ENCODE measurements at regions of chr17 and their contacts with region 1.

Region 1: GRCh38 chr17:38853292-38854219 is at the start of gene RPL23:
- DNase-seq: peak; percentile 88
- H3K4me3 ChIP-seq: peak within 1 kb of the TSS; percentile 74 to 91
- H3K27ac ChIP-seq: peak within 1 kb of the TSS; percentile 95 to 96
- H3K4me1 ChIP-seq: peaks cover 17 to 20% of the 10 kb centered on the region in 2 experiments; a peak in 2 of 4 replicates
- H3K27me3 ChIP-seq: no peaks in the 10 kb centered on the region
- CTCF ChIP-seq: no peak
- EP300 ChIP-seq: no peak
- RAD21 ChIP-seq: no peak
- polyA plus RNA-seq, gene RPL23: 2,658 and 2,763 TPM in 2 replicates

Region 2: DNA sequence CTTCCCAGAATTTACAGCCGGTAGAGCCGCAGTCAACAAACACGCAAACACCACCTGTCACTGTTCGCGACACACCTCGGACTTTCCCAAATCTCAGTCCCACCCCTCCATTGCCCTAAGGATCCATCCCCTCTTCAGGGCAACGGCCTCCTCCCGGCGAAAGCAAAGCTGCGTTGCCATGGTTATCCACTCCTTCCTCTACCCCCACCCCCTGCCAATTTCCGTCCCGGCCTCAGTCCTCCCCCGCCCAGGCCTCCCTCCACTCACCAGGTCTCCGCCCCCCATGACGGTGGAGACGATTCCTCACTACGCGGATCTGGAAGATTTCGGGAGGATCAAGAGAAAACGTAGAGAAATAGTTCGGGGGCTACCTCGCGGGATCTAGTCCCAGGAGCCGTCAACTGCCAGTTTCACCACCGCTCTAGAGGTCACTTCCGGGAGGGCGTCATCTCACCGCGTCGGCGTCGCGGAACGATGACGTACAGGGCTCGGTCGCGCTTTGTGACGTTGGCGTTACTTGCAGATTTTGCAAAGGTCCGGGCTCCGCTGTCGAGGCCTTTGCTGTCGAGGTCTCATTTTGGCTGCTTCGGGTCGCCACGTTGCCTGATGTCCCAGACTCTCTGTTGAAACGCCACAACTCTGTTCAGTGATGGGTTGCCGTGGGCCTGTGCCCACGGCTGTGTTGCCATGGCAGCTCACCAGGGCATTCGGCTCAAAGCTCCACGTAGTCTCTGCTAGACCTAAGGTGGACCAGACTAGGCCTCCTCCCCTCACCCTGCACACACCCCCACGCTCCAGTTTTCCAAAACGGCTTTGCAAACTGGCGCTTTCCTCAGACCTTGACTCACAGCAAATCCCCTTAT is 28.4 kb before region 1 on chr17 and contains the start of gene CWC25:
- CTCF ChIA-PET with region 1: no interaction called
- POLR2A ChIA-PET with region 1: interaction called, 16 read pairs
- DNase-seq: peak; percentile 90
- H3K4me3 ChIP-seq: peak within 1 kb of the TSS; percentile 73 to 94
- H3K27ac ChIP-seq: peak within 1 kb of the TSS; percentile 94 to 97
- H3K4me1 ChIP-seq: peaks cover 5 to 15% of the 10 kb centered on the region in 2 experiments; a peak in 1 of 4 replicates
- H3K27me3 ChIP-seq: no peaks in the 10 kb centered on the region
- CTCF ChIP-seq: no peak
- EP300 ChIP-seq: peak in 1 of 2 experiments; percentile 31; a peak in 1 of 4 replicates
- RAD21 ChIP-seq: no peak
- polyA plus RNA-seq, gene CWC25: 15.6 and 21.2 TPM in 2 replicates

Region 3: GRCh38 chr17:38868817-38869525 is 15.4 kb after region 1 on chr17:
- CTCF ChIA-PET with region 1: interaction called, 10 read pairs
- POLR2A ChIA-PET with region 1: interaction called, 41 read pairs
- DNase-seq: peak; percentile 64
- H3K4me3 ChIP-seq: peak overlapping the region; percentile 94 to 97
- H3K27ac ChIP-seq: peak overlapping the region; percentile 89 to 96
- H3K4me1 ChIP-seq: peaks cover 19 to 28% of the 10 kb centered on the region in 2 experiments; a peak in 3 of 4 replicates
- H3K27me3 ChIP-seq: no peaks in the 10 kb centered on the region
- CTCF ChIP-seq: peak; percentile 52
- EP300 ChIP-seq: peak in 1 of 2 experiments; percentile 11; a peak in 2 of 4 replicates
- RAD21 ChIP-seq: 0 out of 2 replicates have a peak, but pooled peaks have one; percentile 0

Region 4: DNA sequence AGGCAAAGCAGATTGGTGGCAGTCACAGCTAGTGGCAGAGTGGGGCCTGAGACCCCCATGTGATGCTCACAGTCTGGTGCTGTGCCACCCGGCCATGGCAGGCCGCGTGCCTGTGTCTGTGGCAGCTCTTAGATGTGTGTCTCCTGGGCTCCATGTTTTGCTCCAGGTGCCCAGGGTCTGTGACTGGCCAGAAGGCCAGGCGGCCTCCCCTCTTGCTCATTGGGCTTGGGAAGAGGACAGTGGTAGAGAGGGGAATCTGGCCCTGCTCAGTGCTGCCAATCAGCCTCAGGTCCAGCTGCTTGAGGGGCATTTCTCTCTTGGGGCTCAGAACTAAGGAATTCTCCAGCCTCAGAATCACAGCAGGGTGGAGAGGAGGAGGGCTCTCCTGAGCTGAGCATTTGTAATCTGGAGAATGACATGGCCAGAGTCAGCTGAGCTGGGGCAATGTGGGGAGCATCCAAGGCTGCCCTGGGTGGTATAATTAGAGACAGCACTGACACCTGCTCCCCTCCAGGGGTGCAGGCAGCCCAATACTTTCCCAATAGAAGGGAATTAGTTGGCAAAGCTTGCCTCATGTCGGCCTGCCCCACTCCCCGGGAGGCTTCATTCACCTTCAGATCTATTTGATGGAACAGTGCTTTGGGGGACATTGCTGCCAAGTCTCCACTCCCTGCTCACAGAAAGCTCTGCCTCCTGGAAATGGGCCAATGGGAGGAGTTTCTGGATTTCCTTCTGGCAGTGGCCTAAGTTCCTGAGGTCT is 69.2 kb after region 1 on chr17:
- CTCF ChIA-PET with region 1: no interaction called
- POLR2A ChIA-PET with region 1: interaction called, 13 read pairs
- DNase-seq: peak; percentile 52
- H3K4me3 ChIP-seq: no peak overlapping the region
- H3K27ac ChIP-seq: peak overlapping the region; percentile 49 to 67; a peak in 3 of 4 replicates
- H3K4me1 ChIP-seq: peaks cover 9 to 27% of the 10 kb centered on the region in 2 experiments; a peak in 2 of 4 replicates
- H3K27me3 ChIP-seq: no peaks in the 10 kb centered on the region
- CTCF ChIP-seq: no peak
- EP300 ChIP-seq: no peak; a peak in 1 of 4 replicates
- RAD21 ChIP-seq: no peak